ENCODE measurements at regions of chr9 and their contacts with region 1.

Region 1: DNA sequence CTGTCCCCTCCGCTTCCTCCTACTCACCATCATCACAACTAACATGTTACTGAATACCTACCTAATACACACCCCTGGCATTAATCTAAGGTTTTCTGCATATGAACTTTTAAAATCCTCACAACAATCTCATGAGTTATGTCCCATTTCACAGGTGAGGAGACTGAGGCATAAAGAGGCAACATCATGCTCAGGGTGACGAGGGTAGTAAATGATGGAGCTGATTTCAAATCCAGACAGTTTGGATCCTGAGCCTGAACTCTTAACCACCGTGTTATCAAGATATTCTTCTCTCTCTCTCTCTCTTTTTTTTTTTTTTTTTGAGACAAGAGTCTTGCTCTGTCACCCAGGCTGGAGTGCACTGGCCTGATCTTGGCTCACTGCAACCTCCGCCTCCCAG is 12.9 kb upstream of the EEIG1 start:
- DNase-seq: no peak
- H3K27ac ChIP-seq: no peak overlapping the region
- CTCF ChIP-seq: no peak

Region 2: GRCh38 chr9:127977886-127978621 is 15.7 kb before region 1 on chr9:
- CTCF ChIA-PET with region 1: interaction called, 4 read pairs
- POLR2A ChIA-PET with region 1: interaction called, 11 read pairs
- DNase-seq: no peak
- H3K27ac ChIP-seq: peak overlapping the region; percentile 100
- CTCF ChIP-seq: no peak

Region 3: GRCh38 chr9:128022886-128023285 is 29.2 kb after region 1 on chr9:
- CTCF ChIA-PET with region 1: no interaction called
- POLR2A ChIA-PET with region 1: no interaction called
- DNase-seq: no peak
- H3K27ac ChIP-seq: no peak overlapping the region
- CTCF ChIP-seq: no peak

Measured in RWPE1 (cell line).